K562 (cell line): ENCODE measurements at regions of chr7 and their contacts with region 1.

Region 1: DNA sequence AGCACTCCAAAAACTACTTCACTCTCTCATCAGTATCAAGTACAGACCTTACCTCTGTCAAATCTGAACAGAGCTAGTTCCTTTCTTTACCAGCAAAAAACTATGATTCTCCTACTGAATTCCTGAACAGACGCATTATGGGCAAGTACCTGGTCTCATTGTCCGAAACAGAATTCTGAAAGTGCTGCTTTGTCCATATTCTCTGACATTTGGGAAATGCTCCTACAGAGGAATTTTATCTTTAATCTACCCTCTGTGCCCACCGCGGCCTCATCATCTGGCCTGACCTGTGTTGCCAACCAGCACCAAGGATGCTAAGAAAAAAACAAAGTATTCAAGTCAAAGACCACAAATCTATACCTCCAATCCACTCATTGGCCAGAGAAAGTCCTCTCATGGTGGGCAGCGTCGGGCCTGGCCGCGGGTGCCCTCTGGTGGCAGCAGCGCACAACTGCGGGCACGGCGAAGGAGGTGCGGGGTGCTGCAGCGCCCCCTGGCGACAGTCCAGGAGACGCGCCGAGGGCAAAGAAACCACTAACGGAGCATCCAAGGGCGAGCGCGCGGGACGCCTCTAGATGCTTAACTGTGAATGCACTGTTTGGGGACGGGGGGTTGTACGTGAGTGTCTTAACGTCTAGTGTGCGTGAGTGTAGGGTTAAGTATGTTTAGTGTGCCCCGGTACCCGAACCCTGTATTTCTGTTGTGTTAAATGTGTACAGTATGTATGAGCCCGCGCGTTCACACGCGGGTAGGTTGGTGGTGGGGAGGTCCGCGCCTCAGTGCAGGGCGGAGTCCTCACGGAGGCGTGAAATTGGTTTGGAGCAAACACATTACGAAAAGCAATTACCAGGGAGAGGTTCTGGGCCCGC is 5.0 kb upstream of the GBX1 start:
- DNase-seq: peak; percentile 90 to 97 (median 94)
- ATAC-seq: peak; percentile 81
- H3K4me3 ChIP-seq: no peak overlapping the region
- H3K27ac ChIP-seq: no peak overlapping the region
- H3K4me1 ChIP-seq: peaks cover 0 to 28% of the 10 kb centered on the region in 2 experiments; a peak in 4 of 5 replicates
- H3K27me3 ChIP-seq: peaks cover 21 to 51% of the 10 kb centered on the region in 2 experiments
- CTCF ChIP-seq: peak; percentile 100
- EP300 ChIP-seq: peak; percentile 23; the same call in 1 of the 2 replicates
- POLR2A ChIP-seq: no peak
- RAD21 ChIP-seq: peak; percentile 97 to 100

Region 2: GRCh38 chr7:150876817-150877526 is 295.5 kb before region 1 on chr7:
- CTCF ChIA-PET with region 1: interaction called, 15 read pairs
- POLR2A ChIA-PET with region 1: no interaction called
- in situ Hi-C with region 1: no loop called
- intact Hi-C with region 1: loop called (anchors 10 kb)
- DNase-seq: peak; percentile 86 to 96 (median 94)
- ATAC-seq: peak; percentile 91
- H3K4me3 ChIP-seq: no peak overlapping the region
- H3K27ac ChIP-seq: no peak overlapping the region
- H3K4me1 ChIP-seq: peaks cover 0 to 3% of the 10 kb centered on the region in 2 experiments; a peak in 2 of 5 replicates
- H3K27me3 ChIP-seq: peaks cover 14 to 24% of the 10 kb centered on the region in 2 experiments
- CTCF ChIP-seq: peak; percentile 61 to 78 (median 75); a peak in 5 of 6 replicates
- EP300 ChIP-seq: no peak
- POLR2A ChIP-seq: no peak
- RAD21 ChIP-seq: peak; percentile 46 to 64

Region 3: DNA sequence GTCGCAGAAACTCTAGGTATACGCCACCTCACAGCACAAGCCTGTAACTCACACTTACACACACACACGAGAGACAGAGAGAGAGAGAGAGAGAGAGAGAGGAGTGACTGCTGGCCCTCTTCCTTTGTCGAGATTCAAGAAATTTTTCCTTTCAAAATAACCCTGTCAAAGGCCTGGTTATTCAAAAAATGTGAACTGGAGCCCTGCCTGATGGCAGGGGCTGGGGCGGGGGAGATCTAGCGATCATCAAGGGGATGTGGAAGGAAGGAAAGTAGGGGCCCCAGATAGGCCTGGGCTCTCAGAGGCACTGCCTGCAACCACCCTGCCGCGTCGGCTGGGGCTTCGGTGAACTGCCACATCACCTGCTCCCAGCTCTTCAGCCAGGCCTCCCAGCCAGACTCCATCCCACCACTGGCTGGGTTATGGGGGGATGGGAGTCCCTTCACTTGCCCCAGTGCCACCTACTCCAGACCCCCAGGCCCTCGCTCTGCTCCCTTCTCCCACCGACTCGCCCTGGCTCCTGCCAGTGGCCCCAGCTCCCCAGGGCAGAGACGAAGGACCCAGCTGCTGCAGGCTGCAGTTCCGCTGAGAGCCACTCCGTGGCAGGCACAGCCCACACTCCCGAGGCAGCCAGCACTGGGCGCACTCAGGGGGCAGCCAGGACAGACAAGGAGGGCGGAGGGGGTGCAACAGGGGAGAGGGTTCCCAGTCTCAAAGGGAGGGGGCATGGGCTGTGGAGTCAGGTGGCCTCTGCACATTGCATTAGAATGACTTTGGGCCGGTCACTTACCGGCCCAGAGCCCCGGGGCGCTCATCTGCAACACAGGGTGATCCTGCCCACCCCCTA is 209.7 kb before region 1 on chr7:
- CTCF ChIA-PET with region 1: interaction called, 5 read pairs
- POLR2A ChIA-PET with region 1: no interaction called
- in situ Hi-C with region 1: no loop called
- intact Hi-C with region 1: loop called (anchors 10 kb)
- DNase-seq: peak; percentile 81 to 92 (median 86)
- ATAC-seq: peak; percentile 79
- H3K4me3 ChIP-seq: no peak overlapping the region
- H3K27ac ChIP-seq: peak overlapping the region; percentile 99
- H3K4me1 ChIP-seq: peaks cover 77 to 80% of the 10 kb centered on the region in 2 experiments
- H3K27me3 ChIP-seq: no peaks in the 10 kb centered on the region
- CTCF ChIP-seq: peak; percentile 98 to 99 (median 98)
- EP300 ChIP-seq: 0 out of 2 replicates have a peak, but pooled peaks have one; percentile 4
- POLR2A ChIP-seq: no peak
- RAD21 ChIP-seq: peak; percentile 98

Region 4: GRCh38 chr7:151017953-151018420 is 154.5 kb before region 1 on chr7:
- CTCF ChIA-PET with region 1: no interaction called
- POLR2A ChIA-PET with region 1: no interaction called
- in situ Hi-C with region 1: no loop called
- intact Hi-C with region 1: loop called (anchors 10 kb)
- DNase-seq: peak; percentile 88 to 92 (median 90)
- ATAC-seq: peak; percentile 93
- H3K4me3 ChIP-seq: peak overlapping the region; percentile 40
- H3K27ac ChIP-seq: peak overlapping the region; percentile 70
- H3K4me1 ChIP-seq: peaks cover 21 to 69% of the 10 kb centered on the region in 2 experiments; a peak in 4 of 5 replicates
- H3K27me3 ChIP-seq: no peaks in the 10 kb centered on the region; a peak in 1 of 5 replicates
- CTCF ChIP-seq: peak; percentile 95 to 100 (median 98)
- EP300 ChIP-seq: no peak
- POLR2A ChIP-seq: peak; percentile 68
- RAD21 ChIP-seq: peak; percentile 87 to 89

Region 5: DNA sequence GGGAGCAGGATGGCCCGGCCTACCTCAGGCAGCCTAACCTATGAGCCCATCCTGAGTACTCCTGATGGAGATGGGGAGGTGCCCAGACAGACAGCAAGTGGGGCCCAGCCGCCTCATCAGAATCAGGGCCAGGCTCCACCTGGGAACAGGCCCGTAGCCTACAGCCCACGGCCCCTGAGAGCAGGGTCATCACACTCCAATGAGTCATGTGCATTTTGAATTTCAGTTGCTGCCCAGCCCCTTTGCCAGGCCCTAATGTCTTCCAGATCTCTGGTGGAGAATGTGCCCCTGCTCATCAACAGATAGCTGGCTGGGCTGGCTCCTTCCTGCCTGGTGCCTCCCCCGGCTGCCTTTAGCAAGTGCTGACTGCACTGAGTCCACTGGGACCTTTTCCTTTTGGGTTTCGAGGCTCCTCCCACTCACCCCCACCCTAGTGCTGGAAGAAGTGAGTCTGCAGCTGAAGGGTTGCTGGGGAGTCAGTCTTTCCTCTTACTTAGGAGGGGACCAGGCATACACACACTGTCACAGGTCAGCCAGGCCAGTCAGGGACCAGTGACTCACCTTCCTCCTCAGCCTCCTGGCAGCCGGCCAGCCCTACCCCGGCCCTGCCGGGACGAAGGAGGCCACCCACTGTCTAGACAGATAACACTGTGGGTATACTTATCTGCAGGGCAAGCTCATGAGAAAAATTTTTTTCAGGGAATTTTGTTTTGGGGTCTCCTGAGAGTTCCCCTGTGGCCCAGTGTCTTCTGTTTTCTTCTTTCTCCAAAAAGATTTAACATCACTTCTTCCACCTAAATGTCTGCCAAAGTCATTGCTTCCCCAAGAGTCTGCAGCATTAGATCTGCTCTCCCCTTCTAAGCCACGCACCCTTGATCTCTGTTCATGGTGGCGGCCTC is 133.3 kb before region 1 on chr7:
- CTCF ChIA-PET with region 1: no interaction called
- POLR2A ChIA-PET with region 1: no interaction called
- in situ Hi-C with region 1: no loop called
- intact Hi-C with region 1: no loop called
- DNase-seq: peak; percentile 99 to 100 (median 99)
- ATAC-seq: peak; percentile 97
- H3K4me3 ChIP-seq: no peak overlapping the region; the same call in 1 of the 2 replicates
- H3K27ac ChIP-seq: peak overlapping the region; percentile 65
- H3K4me1 ChIP-seq: peaks cover 24 to 73% of the 10 kb centered on the region in 2 experiments
- H3K27me3 ChIP-seq: no peaks in the 10 kb centered on the region
- CTCF ChIP-seq: peak in 1 of 3 experiments; percentile 7; a peak in 1 of 6 replicates
- EP300 ChIP-seq: peak; percentile 93
- POLR2A ChIP-seq: peak; percentile 56; the same call in 1 of the 2 replicates
- RAD21 ChIP-seq: peak in 1 of 2 experiments; percentile 28; a peak in 3 of 4 replicates

Region 6: DNA sequence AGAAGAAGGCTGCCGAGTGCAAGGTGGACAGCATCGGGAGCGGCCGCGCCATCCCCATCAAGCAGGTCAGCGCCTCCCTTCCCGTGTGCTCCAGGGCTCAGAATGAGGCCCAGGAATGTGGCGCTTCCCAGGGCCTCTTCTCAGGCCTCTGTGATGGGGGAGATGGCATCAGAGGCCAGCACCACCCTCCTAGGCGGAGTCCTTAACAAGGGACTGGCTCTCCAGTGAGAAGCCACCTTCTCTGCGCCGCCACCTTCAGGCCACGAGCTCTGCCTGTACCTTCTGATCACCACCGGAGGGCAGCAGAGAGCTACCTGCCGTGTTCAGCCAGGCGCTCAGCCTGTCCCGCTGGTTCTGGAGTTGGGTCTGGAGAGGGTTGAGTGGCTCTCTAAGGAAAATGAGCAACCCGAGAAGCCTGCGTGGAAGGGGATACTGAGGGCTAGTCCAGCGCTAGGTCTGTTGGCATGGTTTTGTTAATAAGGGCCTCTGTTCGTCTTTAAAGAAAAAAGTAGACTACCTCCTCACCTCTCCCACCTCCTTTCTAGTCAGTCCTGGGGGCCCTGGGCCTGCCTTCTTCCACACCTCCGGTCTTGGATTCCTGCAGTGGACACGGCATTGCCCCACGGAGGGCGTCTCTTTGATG is 48.6 kb before region 1 on chr7:
- CTCF ChIA-PET with region 1: interaction called, 74 read pairs
- POLR2A ChIA-PET with region 1: no interaction called
- in situ Hi-C with region 1: no loop called
- intact Hi-C with region 1: loop called (anchors 1 kb)
- DNase-seq: peak; percentile 95 to 97 (median 96)
- ATAC-seq: peak; percentile 100
- H3K4me3 ChIP-seq: no peak overlapping the region
- H3K27ac ChIP-seq: no peak overlapping the region
- H3K4me1 ChIP-seq: peaks cover 0 to 47% of the 10 kb centered on the region in 2 experiments; a peak in 1 of 5 replicates
- H3K27me3 ChIP-seq: no peaks in the 10 kb centered on the region; a peak in 1 of 5 replicates
- CTCF ChIP-seq: peak; percentile 100
- EP300 ChIP-seq: no peak
- POLR2A ChIP-seq: no peak
- RAD21 ChIP-seq: peak; percentile 86 to 94

Region 7: GRCh38 chr7:151304856-151305255 is 132.3 kb after region 1 on chr7:
- CTCF ChIA-PET with region 1: interaction called, 23 read pairs
- POLR2A ChIA-PET with region 1: no interaction called
- in situ Hi-C with region 1: no loop called
- intact Hi-C with region 1: loop called (anchors 1 kb)
- DNase-seq: peak in 3 of 4 experiments; percentile 16 to 24 (median 17)
- ATAC-seq: no peak
- H3K4me3 ChIP-seq: no peak overlapping the region
- H3K27ac ChIP-seq: no peak overlapping the region
- H3K4me1 ChIP-seq: peaks cover 3 to 8% of the 10 kb centered on the region in 2 experiments; a peak in 4 of 5 replicates
- H3K27me3 ChIP-seq: peaks cover 35 to 80% of the 10 kb centered on the region in 2 experiments; a peak in 4 of 5 replicates
- CTCF ChIP-seq: no peak
- EP300 ChIP-seq: no peak
- POLR2A ChIP-seq: no peak
- RAD21 ChIP-seq: no peak

Region 8: GRCh38 chr7:151503902-151504714 is 331.6 kb after region 1 on chr7:
- CTCF ChIA-PET with region 1: no interaction called
- POLR2A ChIA-PET with region 1: no interaction called
- in situ Hi-C with region 1: no loop called
- intact Hi-C with region 1: no loop called
- DNase-seq: no peak
- ATAC-seq: no peak
- H3K4me3 ChIP-seq: no peak overlapping the region
- H3K27ac ChIP-seq: no peak overlapping the region
- H3K4me1 ChIP-seq: peaks cover 10 to 17% of the 10 kb centered on the region in 2 experiments; a peak in 4 of 5 replicates
- H3K27me3 ChIP-seq: no peaks in the 10 kb centered on the region
- CTCF ChIP-seq: no peak
- EP300 ChIP-seq: no peak
- POLR2A ChIP-seq: 0 out of 2 replicates have a peak, but pooled peaks have one; percentile 1
- RAD21 ChIP-seq: no peak